Breast epithelium (tissue), 4 donors: ENCODE measurements at regions of chr19 and their contacts with region 1.

Region 1: GRCh38 chr19:8085598-8086408 is 33.2 kb downstream of the CCL25 start:
- DNase-seq: no peak
- H3K4me3 ChIP-seq: no peak overlapping the region
- H3K27ac ChIP-seq: no peak overlapping the region
- H3K4me1 ChIP-seq: no peaks in the 10 kb centered on the region
- H3K27me3 ChIP-seq: no peaks in the 10 kb centered on the region
- CTCF ChIP-seq: no peak
- POLR2A ChIP-seq: no peak

Region 2: GRCh38 chr19:6340493-6341201 is 1745.2 kb before region 1 on chr19:
- intact Hi-C with region 1: loop called (anchors 5 kb)
- DNase-seq: no peak
- H3K4me3 ChIP-seq: no peak overlapping the region
- H3K27ac ChIP-seq: no peak overlapping the region
- H3K4me1 ChIP-seq: no peaks in the 10 kb centered on the region
- H3K27me3 ChIP-seq: no peaks in the 10 kb centered on the region
- CTCF ChIP-seq: no peak
- POLR2A ChIP-seq: no peak

Region 3: DNA sequence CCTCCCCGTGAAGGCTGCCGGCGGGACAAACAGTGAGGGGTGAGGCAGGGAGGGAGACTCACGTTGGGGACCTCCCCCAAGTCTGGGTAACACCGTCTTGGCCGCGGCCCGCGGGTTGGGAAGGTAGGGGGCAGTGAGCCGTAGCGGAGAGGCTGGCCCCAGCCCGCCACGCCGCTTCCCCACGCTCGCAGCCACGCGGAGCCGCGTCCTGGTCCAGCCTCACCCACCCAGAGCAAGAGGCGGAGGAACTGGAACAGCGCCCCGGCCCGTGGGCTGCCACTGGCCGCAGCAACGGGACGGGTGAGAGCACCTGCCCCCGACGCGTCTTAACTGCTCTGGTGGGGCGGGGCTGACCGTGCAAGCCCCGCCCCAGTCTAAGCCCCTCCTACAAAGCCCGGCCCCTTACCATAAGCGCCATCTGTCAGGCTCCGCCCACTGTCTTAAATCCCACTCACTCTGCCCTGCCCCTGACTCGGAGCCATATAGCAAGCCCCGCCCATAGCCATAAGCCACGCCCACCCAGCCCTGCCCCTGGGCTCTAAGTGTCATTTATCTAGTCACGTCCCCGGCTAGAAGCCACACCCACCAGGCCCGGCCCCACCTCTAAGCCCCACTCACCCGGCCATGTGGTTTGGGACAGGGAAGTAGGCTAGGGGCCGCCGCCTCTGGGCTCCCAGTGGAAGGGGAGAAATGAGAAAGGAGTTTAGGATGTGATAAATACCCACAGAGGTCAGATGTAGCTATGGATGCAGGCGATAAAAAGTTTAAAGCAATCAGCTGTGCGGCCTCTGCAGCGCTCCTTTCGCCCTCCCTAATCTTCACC is 35.3 kb before region 1 on chr19:
- intact Hi-C with region 1: no loop called
- DNase-seq: peak; percentile 55 to 64
- H3K4me3 ChIP-seq: peak overlapping the region; percentile 8 to 63 (median 41)
- H3K27ac ChIP-seq: no peak overlapping the region
- H3K4me1 ChIP-seq: no peaks in the 10 kb centered on the region
- H3K27me3 ChIP-seq: no peaks in the 10 kb centered on the region
- CTCF ChIP-seq: no peak
- POLR2A ChIP-seq: no peak

Region 4: DNA sequence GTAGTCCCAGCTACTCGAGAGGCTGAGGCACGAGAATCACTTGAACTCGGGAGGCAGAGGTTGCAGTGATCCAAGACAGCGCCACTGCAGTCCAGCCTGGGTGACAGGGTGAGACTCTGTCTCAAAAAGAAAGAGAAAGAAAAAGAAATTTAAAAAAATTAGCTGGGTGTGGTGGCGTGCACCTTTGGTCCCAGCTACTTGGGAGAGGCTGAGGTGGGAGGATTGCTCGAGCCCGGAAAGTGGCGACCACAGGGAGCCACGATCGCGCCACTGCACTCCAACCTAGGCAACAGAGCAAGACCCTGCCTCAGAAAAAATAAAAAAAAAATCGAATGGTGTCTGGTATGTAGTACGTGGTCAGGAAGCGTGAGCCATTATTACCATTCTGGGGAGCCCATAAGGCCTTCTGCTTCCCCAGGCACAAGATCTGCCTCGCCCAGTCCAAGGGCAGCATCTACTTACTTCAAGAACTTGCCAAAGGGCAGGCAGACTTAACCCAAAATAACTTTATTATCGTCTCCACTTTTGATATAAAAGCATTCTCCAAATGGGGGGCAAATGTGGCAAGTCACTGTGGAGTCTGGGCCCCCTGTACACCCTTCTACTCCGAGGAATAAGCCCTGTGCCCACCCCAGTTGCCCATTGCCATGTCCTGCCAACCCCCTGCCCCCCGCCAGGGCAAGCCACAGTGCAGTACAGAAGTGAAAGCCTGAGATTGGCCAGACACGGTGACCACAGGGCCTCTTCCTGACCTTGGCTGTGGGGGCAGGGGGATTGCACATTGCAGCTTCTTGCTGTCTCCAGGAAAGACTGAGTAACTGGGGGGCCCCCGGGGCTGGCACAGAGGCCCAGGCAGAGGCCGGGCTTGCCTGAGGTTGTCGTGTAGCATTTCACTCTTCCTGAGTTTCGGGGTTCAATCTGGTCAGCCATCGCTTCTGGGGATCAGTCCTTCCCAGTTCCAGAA is 20.6 kb before region 1 on chr19:
- intact Hi-C with region 1: loop called (anchors 2 kb)
- DNase-seq: no peak
- H3K4me3 ChIP-seq: no peak overlapping the region
- H3K27ac ChIP-seq: no peak overlapping the region
- H3K4me1 ChIP-seq: no peaks in the 10 kb centered on the region
- H3K27me3 ChIP-seq: no peaks in the 10 kb centered on the region
- CTCF ChIP-seq: no peak
- POLR2A ChIP-seq: no peak